ENCODE measurements at regions of chr20 and their contacts with region 1.

Region 1: DNA sequence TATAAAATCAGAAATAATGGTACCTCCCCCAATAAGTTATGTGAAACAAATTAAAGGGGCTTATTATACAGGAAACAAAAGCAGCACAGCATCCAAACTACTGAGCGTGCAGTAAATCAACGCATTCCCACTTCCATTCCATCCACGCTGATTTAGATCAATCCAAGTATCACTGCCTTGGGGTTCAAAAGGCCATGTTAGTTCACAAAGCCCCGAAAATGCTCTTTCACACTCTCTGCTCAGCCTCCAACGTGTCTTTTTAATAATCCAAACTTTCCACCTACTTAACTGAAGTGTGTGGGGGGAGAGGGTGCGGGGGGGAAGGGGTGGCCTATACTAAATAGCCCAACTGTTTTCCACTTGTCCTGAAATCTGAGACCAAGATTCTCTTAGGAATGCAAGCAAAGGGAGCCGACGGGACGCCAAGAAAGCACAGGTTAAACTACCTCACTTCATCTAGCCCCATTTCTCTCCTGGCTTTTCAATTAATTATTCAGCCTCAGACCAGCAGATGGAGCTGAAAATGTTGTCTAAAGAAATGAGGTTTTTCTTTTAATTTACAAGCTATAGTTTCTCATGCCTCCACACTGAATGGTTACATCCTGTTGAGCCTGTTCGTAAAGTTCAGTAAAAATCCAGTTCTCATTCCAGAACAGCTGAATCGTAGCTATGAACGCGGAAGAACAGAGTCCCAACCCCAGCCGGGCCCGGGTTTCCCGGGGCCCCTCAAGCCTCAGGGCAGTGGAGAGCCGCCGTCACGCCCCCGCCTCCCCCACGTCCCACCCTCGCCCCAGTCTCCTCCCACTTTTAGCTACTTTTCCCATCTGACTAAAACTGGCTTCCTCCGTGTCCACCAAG is 1.0 kb upstream of the NXT1 start:
- DNase-seq: peak in 2 of 3 donors; percentile 50 to 83
- ATAC-seq: peak; percentile 85 to 86
- H3K4me3 ChIP-seq: peak overlapping the region; percentile 83
- H3K27ac ChIP-seq: peak overlapping the region; percentile 100
- H3K4me1 ChIP-seq: no peaks in the 10 kb centered on the region
- H3K27me3 ChIP-seq: no peaks in the 10 kb centered on the region

Region 2: GRCh38 chr20:23034721-23035671 is 314.6 kb before region 1 on chr20 and contains the start of gene SSTR4:
- intact Hi-C with region 1: loop called in 1 of 4 experiments (anchors 10 kb)
- DNase-seq: peak in 1 of 3 donors; percentile 62
- ATAC-seq: peak; percentile 19 to 36
- H3K4me3 ChIP-seq: peak within 1 kb of the TSS; percentile 12
- H3K27ac ChIP-seq: no peak within 1 kb of the TSS
- H3K4me1 ChIP-seq: no peaks in the 10 kb centered on the region
- H3K27me3 ChIP-seq: no peaks in the 10 kb centered on the region
- total RNA-seq, gene SSTR4: not detected

Region 3: DNA sequence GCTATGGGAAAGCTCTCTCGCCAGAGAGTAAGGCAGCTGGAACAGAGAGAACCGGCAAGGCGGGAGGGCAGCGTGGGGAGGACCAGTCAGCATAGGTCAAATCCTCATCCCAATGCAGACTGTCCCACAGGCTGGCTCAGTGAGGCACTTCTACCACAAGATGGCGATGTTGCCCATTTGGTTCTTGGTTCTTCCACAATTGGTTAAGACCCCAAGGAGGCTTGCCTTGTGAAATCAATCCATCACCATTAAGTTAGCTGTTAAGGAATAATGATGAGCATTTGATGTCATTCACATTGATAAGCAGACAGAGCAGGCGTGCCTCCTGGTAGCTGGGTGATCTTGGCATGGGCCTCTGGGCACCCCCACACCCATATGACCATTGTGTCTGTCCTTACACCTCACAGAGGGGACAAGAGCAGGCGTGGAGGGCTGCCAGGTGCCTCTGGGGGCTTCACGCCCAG is 92.3 kb after region 1 on chr20:
- intact Hi-C with region 1: loop called in 1 of 4 experiments (anchors 5 kb)
- DNase-seq: peak; percentile 44 to 75 (median 69)
- ATAC-seq: peak; percentile 80 to 82
- H3K4me3 ChIP-seq: no peak overlapping the region
- H3K27ac ChIP-seq: no peak overlapping the region
- H3K4me1 ChIP-seq: no peaks in the 10 kb centered on the region
- H3K27me3 ChIP-seq: no peaks in the 10 kb centered on the region

Region 4: DNA sequence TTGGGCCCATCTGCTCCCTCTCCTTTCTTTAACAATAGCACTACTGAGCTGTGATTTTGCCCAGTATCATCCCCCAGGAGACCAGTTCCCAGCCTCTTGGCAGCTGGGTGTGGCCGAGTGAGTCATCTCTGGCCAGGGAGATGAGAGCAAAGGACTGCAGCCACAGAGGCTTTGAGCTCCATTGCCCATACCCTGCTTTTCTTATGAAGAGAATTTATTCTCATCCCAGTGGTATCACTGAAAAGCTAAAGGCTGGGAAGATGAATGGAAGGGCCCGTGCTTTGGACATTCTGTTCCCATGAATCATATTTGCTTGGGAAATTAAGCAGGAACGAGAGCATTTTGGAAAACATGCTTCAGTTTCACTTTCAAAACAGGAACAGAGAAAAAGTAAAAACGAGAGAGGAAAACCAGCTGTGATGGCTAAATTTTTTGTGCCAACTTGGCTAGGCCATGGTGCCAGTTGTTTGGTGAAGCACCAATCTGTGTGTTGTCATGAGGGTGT is 273.3 kb after region 1 on chr20:
- intact Hi-C with region 1: no loop called
- DNase-seq: peak; percentile 84 to 88 (median 88)
- ATAC-seq: peak; percentile 98 to 99
- H3K4me3 ChIP-seq: peak overlapping the region; percentile 22
- H3K27ac ChIP-seq: peak overlapping the region; percentile 99
- H3K4me1 ChIP-seq: no peaks in the 10 kb centered on the region
- H3K27me3 ChIP-seq: no peaks in the 10 kb centered on the region

Measured in right cardiac atrium (tissue), 5 donors.